Mammary epithelial cell (primary cell): ENCODE measurements at regions of chr10 and their contacts with region 1.

Region 1: GRCh38 chr10:91864099-91864498 is 45.2 kb downstream of the FGFBP3 start:
- DNase-seq: no peak
- H3K4me3 ChIP-seq: no peak overlapping the region
- H3K27ac ChIP-seq: no peak overlapping the region
- H3K4me1 ChIP-seq: no peaks in the 10 kb centered on the region
- H3K27me3 ChIP-seq: no peaks in the 10 kb centered on the region
- CTCF ChIP-seq: no peak

Region 2: DNA sequence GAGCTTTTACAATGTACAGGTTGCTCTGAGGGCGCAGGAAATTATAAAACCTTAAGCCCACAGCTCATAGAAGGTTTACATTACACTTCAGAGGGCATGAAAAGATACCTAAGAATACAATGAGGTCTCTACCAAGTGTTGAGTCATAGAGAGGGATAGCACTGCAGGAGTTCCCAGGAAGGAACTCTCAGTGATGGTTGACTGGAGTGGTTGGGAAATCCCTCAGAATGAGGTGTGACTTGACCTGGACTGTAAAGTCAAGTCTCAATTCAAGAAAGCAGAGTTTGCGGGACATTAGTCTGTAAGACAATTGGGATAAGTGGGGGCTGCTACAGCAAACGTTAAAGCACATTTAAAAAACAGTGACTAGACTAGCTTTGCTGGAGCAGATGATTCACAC is 44.0 kb before region 1 on chr10:
- CTCF ChIA-PET with region 1: no interaction called
- dilution Hi-C with region 1: loop called (anchors 5 kb)
- in situ Hi-C with region 1: no loop called
- intact Hi-C with region 1: loop called (anchors 5 kb)
- DNase-seq: peak; percentile 72
- H3K4me3 ChIP-seq: no peak overlapping the region
- H3K27ac ChIP-seq: no peak overlapping the region
- H3K4me1 ChIP-seq: no peaks in the 10 kb centered on the region
- H3K27me3 ChIP-seq: no peaks in the 10 kb centered on the region
- CTCF ChIP-seq: no peak

Region 3: GRCh38 chr10:91829268-91829667 is 34.8 kb before region 1 on chr10:
- CTCF ChIA-PET with region 1: no interaction called
- dilution Hi-C with region 1: loop called (anchors 5 kb)
- in situ Hi-C with region 1: no loop called
- intact Hi-C with region 1: loop called (anchors 5 kb)
- DNase-seq: no peak
- H3K4me3 ChIP-seq: no peak overlapping the region
- H3K27ac ChIP-seq: no peak overlapping the region
- H3K4me1 ChIP-seq: no peaks in the 10 kb centered on the region
- H3K27me3 ChIP-seq: no peaks in the 10 kb centered on the region
- CTCF ChIP-seq: no peak

Region 4: GRCh38 chr10:91887272-91888076 is 23.4 kb after region 1 on chr10:
- CTCF ChIA-PET with region 1: no interaction called
- dilution Hi-C with region 1: no loop called
- in situ Hi-C with region 1: no loop called
- intact Hi-C with region 1: loop called (anchors 2 kb)
- DNase-seq: no peak
- H3K4me3 ChIP-seq: peak overlapping the region; percentile 40 to 46 (median 44)
- H3K27ac ChIP-seq: no peak overlapping the region
- H3K4me1 ChIP-seq: peaks cover 13% of the 10 kb centered on the region
- H3K27me3 ChIP-seq: no peaks in the 10 kb centered on the region
- CTCF ChIP-seq: no peak

Region 5: DNA sequence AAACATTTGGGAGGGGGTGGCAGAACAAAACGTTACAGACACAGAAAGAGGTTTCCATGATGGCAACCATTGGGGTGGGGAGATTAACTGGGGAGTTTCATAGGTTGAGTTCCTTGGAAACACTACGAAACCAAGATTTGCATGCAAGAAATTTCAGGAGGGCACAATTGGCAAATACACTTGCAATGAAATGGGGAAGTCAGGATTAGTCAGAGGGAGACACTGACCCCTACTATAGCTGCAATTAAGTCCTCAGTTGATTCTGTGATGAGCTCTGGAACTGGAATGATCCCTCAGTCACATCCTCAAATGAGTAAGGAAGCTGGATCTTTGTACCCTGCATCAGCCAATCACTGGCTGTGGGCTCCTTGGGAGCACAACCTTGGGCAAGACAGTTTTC is 404.6 kb after region 1 on chr10:
- CTCF ChIA-PET with region 1: no interaction called
- dilution Hi-C with region 1: no loop called
- in situ Hi-C with region 1: no loop called
- intact Hi-C with region 1: no loop called
- DNase-seq: no peak
- H3K4me3 ChIP-seq: no peak overlapping the region
- H3K27ac ChIP-seq: no peak overlapping the region
- H3K4me1 ChIP-seq: no peaks in the 10 kb centered on the region
- H3K27me3 ChIP-seq: no peaks in the 10 kb centered on the region
- CTCF ChIP-seq: no peak